AG04450 (cell line): ENCODE measurements at regions of chr1 and their contacts with region 1.

Region 1: GRCh38 chr1:36134505-36135329 is 9.7 kb upstream of the COL8A2 start:
- DNase-seq: no peak
- H3K4me3 ChIP-seq: no peak overlapping the region
- H3K27ac ChIP-seq: peak overlapping the region; percentile 47
- H3K27me3 ChIP-seq: no peaks in the 10 kb centered on the region
- CTCF ChIP-seq: peak; percentile 68

Region 2: GRCh38 chr1:35769188-35769758 is 365.4 kb before region 1 on chr1:
- CTCF ChIA-PET with region 1: no interaction called
- POLR2A ChIA-PET with region 1: no interaction called
- DNase-seq: peak; percentile 55
- H3K4me3 ChIP-seq: peak overlapping the region; percentile 78
- H3K27ac ChIP-seq: peak overlapping the region; percentile 70
- H3K27me3 ChIP-seq: no peaks in the 10 kb centered on the region
- CTCF ChIP-seq: peak; percentile 36

Region 3: GRCh38 chr1:35914717-35915116 is 220.0 kb before region 1 on chr1:
- CTCF ChIA-PET with region 1: no interaction called
- POLR2A ChIA-PET with region 1: no interaction called
- DNase-seq: no peak
- H3K4me3 ChIP-seq: no peak overlapping the region
- H3K27ac ChIP-seq: no peak overlapping the region
- H3K27me3 ChIP-seq: no peaks in the 10 kb centered on the region
- CTCF ChIP-seq: no peak

Region 4: DNA sequence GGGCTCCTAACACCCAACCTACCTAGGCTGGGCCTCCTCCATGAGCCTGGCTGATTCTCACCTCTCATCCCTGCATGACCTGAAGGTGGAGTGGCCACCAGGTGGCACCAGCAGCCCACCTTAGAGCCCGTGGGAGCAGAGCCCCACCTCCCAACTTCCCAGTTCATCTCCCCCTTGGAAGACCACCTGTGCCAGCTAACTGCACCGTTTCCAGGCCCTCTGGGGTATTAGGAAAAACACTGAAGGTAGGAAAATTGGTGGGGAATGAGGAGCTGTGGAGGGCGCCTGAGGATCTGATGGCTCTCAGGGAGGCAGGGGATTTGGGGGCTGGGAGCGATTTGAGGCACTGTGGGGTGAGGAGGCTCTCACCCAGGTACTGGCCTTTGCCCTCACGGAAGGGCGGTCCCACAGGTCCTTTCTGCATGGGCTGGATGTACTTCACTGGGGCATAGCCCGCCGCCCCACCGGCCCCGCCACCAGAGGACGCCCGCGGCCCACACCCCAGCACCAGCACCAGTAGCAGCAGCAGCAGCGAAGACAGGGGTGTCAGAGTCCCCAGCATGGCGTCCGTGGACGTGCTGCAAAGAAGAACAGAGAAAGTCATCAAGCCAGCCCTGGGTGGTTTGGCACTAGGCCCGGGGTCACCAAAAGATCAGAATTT is 34.9 kb before region 1 on chr1:
- CTCF ChIA-PET with region 1: interaction called, 145 read pairs
- POLR2A ChIA-PET with region 1: interaction called, 4 read pairs
- DNase-seq: peak; percentile 45
- H3K4me3 ChIP-seq: no peak overlapping the region
- H3K27ac ChIP-seq: no peak overlapping the region
- H3K27me3 ChIP-seq: no peaks in the 10 kb centered on the region
- CTCF ChIP-seq: peak; percentile 86

Region 5: GRCh38 chr1:36109041-36109679 is 25.6 kb before region 1 on chr1:
- CTCF ChIA-PET with region 1: interaction called, 145 read pairs
- POLR2A ChIA-PET with region 1: no interaction called
- DNase-seq: peak; percentile 18
- H3K4me3 ChIP-seq: no peak overlapping the region
- H3K27ac ChIP-seq: no peak overlapping the region
- H3K27me3 ChIP-seq: no peaks in the 10 kb centered on the region
- CTCF ChIP-seq: no peak

Region 6: DNA sequence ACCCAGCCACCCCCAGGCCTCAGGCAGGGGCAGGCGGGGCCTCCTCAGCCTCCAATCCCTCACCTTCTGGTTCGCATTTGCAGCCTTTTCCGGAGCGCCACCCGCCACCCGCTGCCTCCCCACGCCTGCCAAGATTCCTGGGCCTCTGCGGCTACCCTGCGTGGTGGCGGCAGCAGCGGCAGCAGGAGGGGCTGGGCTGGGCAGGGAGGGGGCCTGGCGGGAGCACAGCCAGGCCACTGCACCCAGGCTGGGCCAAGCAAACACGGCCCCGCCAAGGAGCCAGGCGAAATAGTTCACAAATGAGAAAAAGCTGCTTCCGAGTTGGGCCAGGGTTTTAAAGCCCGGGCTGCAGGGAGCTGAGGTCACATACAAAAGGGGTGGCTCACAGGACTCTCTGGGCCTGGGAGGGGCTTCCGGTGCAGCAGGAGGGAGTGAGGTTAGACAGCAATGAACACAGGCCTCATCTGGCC is 19.5 kb before region 1 on chr1:
- CTCF ChIA-PET with region 1: interaction called, 44 read pairs
- POLR2A ChIA-PET with region 1: interaction called, 4 read pairs
- DNase-seq: no peak
- H3K4me3 ChIP-seq: no peak overlapping the region
- H3K27ac ChIP-seq: no peak overlapping the region
- H3K27me3 ChIP-seq: no peaks in the 10 kb centered on the region
- CTCF ChIP-seq: no peak

Region 7: DNA sequence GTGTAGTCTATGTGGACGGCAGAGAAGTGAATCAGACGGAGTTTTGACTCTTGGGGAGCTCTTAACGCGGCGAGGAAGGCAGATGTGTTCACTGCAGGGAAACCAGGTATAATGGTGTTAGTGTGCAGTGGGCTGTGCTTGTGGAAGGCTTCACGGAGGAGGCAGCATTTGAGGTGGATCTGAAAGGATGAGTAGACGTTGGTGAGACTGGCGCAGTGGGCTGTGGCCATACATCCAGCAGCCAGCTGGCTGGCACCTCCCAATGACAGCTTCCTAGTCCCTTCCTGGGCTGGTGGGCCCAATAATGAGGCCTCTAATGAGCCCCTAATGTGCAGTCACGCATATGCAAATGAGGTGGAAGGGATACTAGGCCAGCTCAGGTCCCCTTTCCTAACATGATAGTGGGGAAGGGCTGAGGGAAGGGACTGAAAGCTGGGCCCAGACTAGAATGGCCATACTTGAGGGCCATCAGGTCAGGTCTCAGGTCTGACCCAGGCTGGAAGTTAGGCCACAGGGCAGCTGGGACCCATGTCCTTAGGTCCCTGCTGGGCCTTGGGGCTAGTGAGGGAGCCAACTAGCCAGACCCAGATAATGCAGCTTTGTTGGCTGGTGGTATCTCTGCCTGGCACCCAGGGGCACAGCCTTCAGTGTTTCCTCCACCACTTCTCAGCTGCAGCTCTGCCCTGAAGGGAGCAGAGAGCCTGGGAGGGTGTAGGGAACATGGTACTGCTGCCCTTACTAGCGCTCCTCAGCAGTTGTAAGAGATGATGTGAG is 25.1 kb after region 1 on chr1:
- CTCF ChIA-PET with region 1: no interaction called
- POLR2A ChIA-PET with region 1: no interaction called
- DNase-seq: no peak
- H3K4me3 ChIP-seq: peak overlapping the region; percentile 26
- H3K27ac ChIP-seq: peak overlapping the region; percentile 78
- H3K27me3 ChIP-seq: no peaks in the 10 kb centered on the region
- CTCF ChIP-seq: no peak

Region 8: GRCh38 chr1:36612881-36613280 is 478.2 kb after region 1 on chr1:
- CTCF ChIA-PET with region 1: no interaction called
- POLR2A ChIA-PET with region 1: no interaction called
- DNase-seq: no peak
- H3K4me3 ChIP-seq: no peak overlapping the region
- H3K27ac ChIP-seq: no peak overlapping the region
- H3K27me3 ChIP-seq: peaks cover 2% of the 10 kb centered on the region
- CTCF ChIP-seq: no peak